ENCODE measurements at regions of chr19 and their contacts with region 1.

Region 1: GRCh38 chr19:12757544-12758274 is 6.1 kb downstream of the BEST2 start:
- DNase-seq: peak; percentile 81
- H3K4me3 ChIP-seq: peak overlapping the region in 2 of 3 experiments; percentile 22 to 39
- H3K27ac ChIP-seq: no peak overlapping the region
- H3K4me1 ChIP-seq: no peaks in the 10 kb centered on the region
- H3K27me3 ChIP-seq: no peaks in the 10 kb centered on the region
- CTCF ChIP-seq: peak; percentile 98 to 99
- POLR2A ChIP-seq: no peak

Region 2: DNA sequence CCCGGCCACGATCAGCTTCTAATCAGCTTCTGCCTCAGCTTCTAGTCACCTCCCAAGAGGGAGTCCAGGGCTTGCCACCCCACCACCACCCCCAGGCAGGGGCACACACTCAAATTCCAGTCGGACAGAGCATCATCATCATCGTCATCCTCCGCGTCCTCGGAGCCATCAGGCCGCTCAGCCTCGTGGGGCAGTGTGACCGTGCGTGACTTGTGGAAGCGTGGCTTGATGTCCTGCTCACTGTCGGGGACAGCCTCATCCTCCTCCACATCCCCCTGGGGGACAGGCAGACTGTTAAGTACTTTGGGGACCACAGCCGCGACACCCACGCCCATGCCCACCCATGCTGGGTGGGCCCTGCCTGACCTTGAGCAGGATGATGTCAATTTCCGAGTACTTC is 46.5 kb before region 1 on chr19:
- CTCF ChIA-PET with region 1: interaction called, 28 read pairs
- POLR2A ChIA-PET with region 1: no interaction called
- dilution Hi-C with region 1: no loop called
- intact Hi-C with region 1: loop called (anchors 1 kb)
- DNase-seq: no peak
- H3K4me3 ChIP-seq: no peak overlapping the region
- H3K27ac ChIP-seq: no peak overlapping the region
- H3K4me1 ChIP-seq: no peaks in the 10 kb centered on the region
- H3K27me3 ChIP-seq: no peaks in the 10 kb centered on the region
- CTCF ChIP-seq: no peak
- POLR2A ChIP-seq: no peak

Region 3: DNA sequence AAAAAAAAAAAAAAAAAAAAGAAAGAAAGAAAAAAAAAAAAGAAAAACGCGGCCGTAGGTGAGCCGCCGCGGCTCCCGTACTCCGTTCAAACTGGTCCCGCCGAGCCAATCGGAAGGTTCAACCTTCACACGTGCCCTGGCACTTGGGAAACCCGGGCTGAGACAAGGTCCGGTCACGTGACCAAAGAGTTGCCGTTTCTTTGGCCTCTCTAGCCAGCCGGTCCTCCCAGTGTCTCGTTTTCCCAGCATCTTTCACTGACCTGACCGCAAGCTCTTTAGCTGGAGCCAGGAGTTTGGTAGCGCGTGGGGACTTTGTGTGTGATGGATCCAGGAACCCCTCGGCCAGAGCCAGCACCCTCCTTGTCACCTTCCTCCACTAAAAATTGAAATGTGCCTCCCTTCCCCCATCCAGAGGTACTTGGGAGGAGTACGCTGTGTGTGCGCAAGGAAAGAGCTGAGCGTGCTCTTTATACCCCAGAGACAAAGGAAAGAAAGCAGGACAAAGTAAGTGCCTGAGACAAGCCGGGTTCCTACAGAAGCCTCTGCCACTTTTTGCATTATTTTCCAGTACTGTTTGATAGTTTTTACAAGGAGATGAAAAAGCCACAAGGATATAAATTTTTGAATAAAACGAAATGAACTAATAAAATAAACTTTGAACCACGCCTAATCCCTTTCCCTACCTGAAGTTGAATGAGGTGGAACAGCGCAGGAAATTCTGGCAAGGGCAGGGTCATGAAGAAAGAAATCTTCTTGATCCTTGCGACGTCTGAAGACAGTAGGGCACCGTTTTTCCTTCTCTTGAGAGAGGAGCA is 34.9 kb before region 1 on chr19:
- CTCF ChIA-PET with region 1: interaction called, 38 read pairs
- POLR2A ChIA-PET with region 1: no interaction called
- dilution Hi-C with region 1: no loop called
- intact Hi-C with region 1: loop called (anchors 2 kb)
- DNase-seq: peak; percentile 97
- H3K4me3 ChIP-seq: peak overlapping the region; percentile 62 to 88 (median 62)
- H3K27ac ChIP-seq: peak overlapping the region; percentile 57
- H3K4me1 ChIP-seq: peaks cover 10% of the 10 kb centered on the region
- H3K27me3 ChIP-seq: no peaks in the 10 kb centered on the region
- CTCF ChIP-seq: no peak
- POLR2A ChIP-seq: peak; percentile 62

Region 4: GRCh38 chr19:12777217-12778016 is 19.7 kb after region 1 on chr19:
- CTCF ChIA-PET with region 1: interaction called, 144 read pairs
- POLR2A ChIA-PET with region 1: no interaction called
- dilution Hi-C with region 1: no loop called
- intact Hi-C with region 1: loop called (anchors 2 kb)
- DNase-seq: peak; percentile 78
- H3K4me3 ChIP-seq: peak overlapping the region; percentile 14 to 57 (median 51)
- H3K27ac ChIP-seq: peak overlapping the region; percentile 82
- H3K4me1 ChIP-seq: peaks cover 23% of the 10 kb centered on the region
- H3K27me3 ChIP-seq: no peaks in the 10 kb centered on the region
- CTCF ChIP-seq: peak; percentile 96 to 97
- POLR2A ChIP-seq: no peak

Region 5: DNA sequence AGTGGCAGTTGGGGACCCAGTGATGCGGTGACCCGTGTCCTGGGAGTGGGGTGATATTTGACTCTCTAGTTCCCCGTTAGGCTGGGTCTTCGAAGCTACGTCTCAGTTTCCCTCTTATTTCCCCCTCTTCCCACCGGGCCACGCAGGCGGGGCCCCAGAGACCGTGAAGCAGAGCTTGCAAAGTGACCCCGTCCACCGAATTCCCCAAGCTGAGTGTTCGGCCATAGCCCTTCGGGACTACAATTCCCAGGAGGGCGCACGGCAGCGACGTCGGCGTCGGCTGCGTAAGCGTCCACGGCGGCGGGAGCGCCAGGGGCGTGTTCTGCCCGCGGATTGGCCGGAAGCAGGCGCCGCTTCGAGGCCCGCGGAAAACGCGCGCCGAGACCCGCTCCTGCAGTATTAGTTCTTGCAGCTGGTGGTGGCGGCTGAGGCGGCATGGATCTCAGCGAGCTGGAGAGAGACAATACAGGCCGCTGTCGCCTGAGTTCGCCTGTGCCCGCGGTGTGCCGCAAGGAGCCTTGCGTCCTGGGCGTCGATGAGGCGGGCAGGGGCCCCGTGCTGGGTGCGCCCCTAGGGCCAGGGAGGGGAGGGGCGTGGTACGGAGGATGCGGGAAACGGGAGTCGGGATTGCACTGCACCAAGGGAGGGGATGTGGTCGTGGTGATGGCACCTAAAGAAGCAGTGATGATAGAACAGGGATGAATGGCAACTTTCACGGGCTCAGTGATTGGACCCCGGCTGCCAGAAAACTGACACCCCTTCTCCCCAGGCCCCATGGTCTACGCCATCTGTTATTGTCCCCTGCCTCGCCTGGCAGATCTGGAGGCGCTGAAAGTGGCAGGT is 48.8 kb after region 1 on chr19 and contains the start of gene RNASEH2A:
- CTCF ChIA-PET with region 1: interaction called, 524 read pairs
- POLR2A ChIA-PET with region 1: no interaction called
- dilution Hi-C with region 1: no loop called
- intact Hi-C with region 1: no loop called
- DNase-seq: peak; percentile 88
- H3K4me3 ChIP-seq: peak within 1 kb of the TSS; percentile 21 to 48 (median 44)
- H3K27ac ChIP-seq: no peak within 1 kb of the TSS
- H3K4me1 ChIP-seq: peaks cover 15% of the 10 kb centered on the region
- H3K27me3 ChIP-seq: no peaks in the 10 kb centered on the region
- CTCF ChIP-seq: no peak
- POLR2A ChIP-seq: peak; percentile 73
- total RNA-seq, gene RNASEH2A: 25.6 and 28.5 TPM in 2 replicates